Right ventricle myocardium inferior (tissue), 1 donor: ENCODE measurements at regions of chr1 and their contacts with region 1.

Region 1: GRCh38 chr1:66339944-66340343 is 194.0 kb upstream of the SGIP1 start:
- DNase-seq: no peak
- ATAC-seq: no peak

Region 2: DNA sequence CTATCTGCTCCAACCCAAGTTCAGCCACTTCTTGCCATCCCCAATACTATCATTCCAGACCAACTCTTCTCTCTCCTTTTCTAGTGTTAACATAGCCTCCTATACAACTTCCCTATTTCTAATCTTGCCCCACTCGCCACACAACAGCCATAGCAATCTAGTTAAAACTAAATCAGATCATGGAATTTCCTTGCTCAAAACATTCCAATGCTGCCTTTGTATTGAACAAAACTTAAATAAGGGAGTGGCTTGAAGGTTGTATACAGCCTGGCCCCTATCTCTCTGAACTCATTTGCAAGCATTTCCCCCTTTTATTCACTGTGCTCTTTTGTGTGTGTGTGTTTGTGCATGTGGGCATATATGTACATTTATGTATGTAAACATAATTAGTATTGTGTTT is 75.9 kb after region 1 on chr1:
- intact Hi-C with region 1: loop called (anchors 2 kb)
- DNase-seq: no peak
- ATAC-seq: no peak